ENCODE measurements at regions of chr2 and their contacts with region 1.

Region 1: GRCh38 chr2:172427256-172427989 is at the start of gene ITGA6:
- DNase-seq: peak; percentile 49 to 86 (median 74)
- ATAC-seq: peak; percentile 66
- H3K4me3 ChIP-seq: peak within 1 kb of the TSS; percentile 71 to 72
- H3K4me3 Mint-ChIP-seq: peak within 1 kb of the TSS; percentile 88
- H3K27ac ChIP-seq: peak within 1 kb of the TSS; percentile 43 to 73
- H3K27ac Mint-ChIP-seq: peak within 1 kb of the TSS; percentile 94
- H3K4me1 ChIP-seq: peaks cover 45% of the 10 kb centered on the region
- H3K4me1 Mint-ChIP-seq: peaks cover 59% of the 10 kb centered on the region
- H3K27me3 ChIP-seq: no peaks in the 10 kb centered on the region
- H3K27me3 Mint-ChIP-seq: no peaks in the 10 kb centered on the region
- CTCF ChIP-seq: no peak
- total RNA-seq, gene ITGA6: 50.5 to 52.1 TPM

Region 2: GRCh38 chr2:171922230-171923022 is 505.0 kb before region 1 on chr2 and contains the start of gene HAT1:
- CTCF ChIA-PET with region 1: no interaction called
- POLR2A ChIA-PET with region 1: no interaction called
- intact Hi-C with region 1: loop called (anchors 2 to 5 kb)
- DNase-seq: peak; percentile 94 to 99 (median 97)
- ATAC-seq: peak; percentile 98
- H3K4me3 ChIP-seq: peak within 1 kb of the TSS; percentile 82 to 97
- H3K4me3 Mint-ChIP-seq: peak within 1 kb of the TSS; percentile 98
- H3K27ac ChIP-seq: peak within 1 kb of the TSS; percentile 94 to 96
- H3K27ac Mint-ChIP-seq: peak within 1 kb of the TSS; percentile 97
- H3K4me1 ChIP-seq: peaks cover 21% of the 10 kb centered on the region
- H3K4me1 Mint-ChIP-seq: peaks cover 45% of the 10 kb centered on the region
- H3K27me3 ChIP-seq: no peaks in the 10 kb centered on the region
- H3K27me3 Mint-ChIP-seq: no peaks in the 10 kb centered on the region
- CTCF ChIP-seq: no peak
- total RNA-seq, gene HAT1: 29.5 to 30.2 TPM

Region 3: DNA sequence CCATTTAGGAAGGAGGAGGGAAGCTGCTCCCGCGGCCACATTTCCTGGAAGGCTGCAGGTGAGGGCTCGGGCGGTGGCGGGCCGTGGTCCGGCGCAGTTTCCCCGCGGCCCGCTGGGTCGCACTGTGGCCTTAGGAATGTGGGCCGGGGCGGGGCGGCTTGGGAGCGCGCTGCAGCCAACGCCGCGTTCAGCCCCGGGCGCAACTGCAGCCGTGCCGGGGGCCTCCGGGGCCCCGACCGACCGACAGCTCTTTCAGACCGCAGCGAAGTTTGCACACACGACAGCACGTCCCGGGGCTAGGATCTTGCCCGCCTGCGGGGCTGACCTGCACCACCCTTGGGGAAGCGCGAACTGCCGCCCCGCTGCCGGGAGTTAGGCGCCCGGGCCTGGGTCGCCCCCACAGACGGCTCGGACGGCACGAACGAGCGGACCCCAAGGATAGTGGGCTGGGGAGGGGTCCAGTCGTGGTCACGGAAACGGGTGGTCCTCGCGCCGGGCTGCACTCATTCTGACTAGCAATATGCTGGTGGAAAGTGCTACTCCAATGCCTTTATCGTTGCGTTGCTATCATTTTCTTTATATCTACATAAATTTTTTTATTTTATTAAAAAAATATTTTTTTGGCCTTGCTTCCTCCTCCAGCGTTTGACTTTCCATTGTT is 254.8 kb before region 1 on chr2:
- CTCF ChIA-PET with region 1: no interaction called
- POLR2A ChIA-PET with region 1: no interaction called
- intact Hi-C with region 1: loop called in 1 of 2 experiments (anchors 10 kb)
- DNase-seq: peak; percentile 10 to 84 (median 62)
- ATAC-seq: peak; percentile 94
- H3K4me3 ChIP-seq: peak overlapping the region; percentile 57 to 66
- H3K4me3 Mint-ChIP-seq: peak overlapping the region; percentile 68
- H3K27ac ChIP-seq: no peak overlapping the region
- H3K27ac Mint-ChIP-seq: no peak overlapping the region
- H3K4me1 ChIP-seq: peaks cover 4% of the 10 kb centered on the region
- H3K4me1 Mint-ChIP-seq: peaks cover 5% of the 10 kb centered on the region
- H3K27me3 ChIP-seq: no peaks in the 10 kb centered on the region
- H3K27me3 Mint-ChIP-seq: no peaks in the 10 kb centered on the region
- CTCF ChIP-seq: peak; percentile 44

Region 4: DNA sequence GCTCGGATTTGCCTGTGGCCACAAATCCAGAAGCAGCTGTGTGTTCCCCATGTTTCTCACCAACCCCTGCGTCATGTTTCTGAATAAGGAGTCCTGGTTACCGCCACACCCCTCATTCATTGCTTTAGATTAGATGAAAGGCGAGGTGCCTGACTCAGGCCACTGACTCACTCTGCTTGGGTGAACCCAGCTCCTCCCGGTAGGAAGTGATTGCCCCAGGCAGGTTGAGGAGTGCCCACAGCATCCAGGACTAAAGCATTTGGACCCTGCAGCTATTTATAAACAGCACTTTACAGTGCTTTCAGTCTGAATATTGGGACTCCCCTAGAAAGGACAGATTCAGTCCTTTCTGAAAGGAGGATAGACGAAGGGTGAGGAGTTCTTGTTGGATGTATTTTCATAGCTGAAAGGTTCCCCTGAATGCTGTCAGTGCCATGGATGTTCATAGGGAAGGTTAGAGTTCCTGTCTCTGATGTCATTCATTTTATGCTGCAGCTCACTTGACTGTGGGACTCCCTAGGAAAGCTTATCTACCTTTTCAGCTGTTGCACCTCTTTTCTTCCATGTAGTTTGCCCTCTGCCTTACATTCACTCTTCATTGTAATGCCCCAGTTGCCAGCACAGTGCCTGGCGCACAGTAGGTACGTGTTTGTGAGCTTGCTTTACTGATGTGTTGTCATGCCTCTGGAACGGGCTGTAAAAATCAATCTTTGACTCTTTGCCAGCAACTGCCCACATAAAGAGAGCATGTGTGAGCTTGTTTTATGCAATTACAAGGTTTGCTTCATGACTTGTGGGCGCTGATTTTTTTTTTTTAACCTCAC is 14.9 kb after region 1 on chr2:
- CTCF ChIA-PET with region 1: interaction called, 155 read pairs
- POLR2A ChIA-PET with region 1: interaction called, 26 read pairs
- intact Hi-C with region 1: loop called in 1 of 2 experiments (anchors 1 kb)
- DNase-seq: peak in 7 of 9 experiments; percentile 27 to 66 (median 55)
- ATAC-seq: peak; percentile 45
- H3K4me3 ChIP-seq: peak overlapping the region in 1 of 2 experiments; percentile 50
- H3K4me3 Mint-ChIP-seq: peak overlapping the region; percentile 81
- H3K27ac ChIP-seq: no peak overlapping the region
- H3K27ac Mint-ChIP-seq: peak overlapping the region; percentile 88
- H3K4me1 ChIP-seq: peaks cover 82% of the 10 kb centered on the region
- H3K4me1 Mint-ChIP-seq: peaks cover 53% of the 10 kb centered on the region
- H3K27me3 ChIP-seq: no peaks in the 10 kb centered on the region
- H3K27me3 Mint-ChIP-seq: no peaks in the 10 kb centered on the region
- CTCF ChIP-seq: no peak

Region 5: GRCh38 chr2:172456002-172456401 is 28.6 kb after region 1 on chr2:
- CTCF ChIA-PET with region 1: interaction called, 657 read pairs
- POLR2A ChIA-PET with region 1: interaction called, 150 read pairs
- intact Hi-C with region 1: no loop called
- DNase-seq: no peak
- ATAC-seq: no peak
- H3K4me3 ChIP-seq: no peak overlapping the region
- H3K4me3 Mint-ChIP-seq: no peak overlapping the region
- H3K27ac ChIP-seq: no peak overlapping the region
- H3K27ac Mint-ChIP-seq: peak overlapping the region; percentile 86
- H3K4me1 ChIP-seq: peaks cover 85% of the 10 kb centered on the region
- H3K4me1 Mint-ChIP-seq: peaks cover 90% of the 10 kb centered on the region
- H3K27me3 ChIP-seq: no peaks in the 10 kb centered on the region
- H3K27me3 Mint-ChIP-seq: no peaks in the 10 kb centered on the region
- CTCF ChIP-seq: no peak

Region 6: GRCh38 chr2:172484253-172484652 is 56.8 kb after region 1 on chr2:
- CTCF ChIA-PET with region 1: interaction called, 11 read pairs
- POLR2A ChIA-PET with region 1: interaction called, 3 read pairs
- intact Hi-C with region 1: no loop called
- DNase-seq: peak in 2 of 9 experiments; percentile 41 to 62
- ATAC-seq: peak; percentile 63
- H3K4me3 ChIP-seq: no peak overlapping the region
- H3K4me3 Mint-ChIP-seq: peak overlapping the region; percentile 15
- H3K27ac ChIP-seq: no peak overlapping the region
- H3K27ac Mint-ChIP-seq: peak overlapping the region; percentile 75
- H3K4me1 ChIP-seq: peaks cover 55% of the 10 kb centered on the region
- H3K4me1 Mint-ChIP-seq: peaks cover 68% of the 10 kb centered on the region
- H3K27me3 ChIP-seq: no peaks in the 10 kb centered on the region
- H3K27me3 Mint-ChIP-seq: no peaks in the 10 kb centered on the region
- CTCF ChIP-seq: peak; percentile 44